T-cell (primary cell): ENCODE measurements at regions of chr2 and their contacts with region 1.

Region 1: GRCh38 chr2:178506101-178506500 is 25.8 kb downstream of the PLEKHA3 start:
- DNase-seq: no peak
- ATAC-seq: no peak
- H3K4me3 ChIP-seq: no peak overlapping the region
- H3K4me3 Mint-ChIP-seq: no peak overlapping the region
- H3K27ac ChIP-seq: no peak overlapping the region
- H3K27ac Mint-ChIP-seq: no peak overlapping the region
- H3K4me1 ChIP-seq: no peaks in the 10 kb centered on the region
- H3K4me1 Mint-ChIP-seq: no peaks in the 10 kb centered on the region
- H3K27me3 ChIP-seq: no peaks in the 10 kb centered on the region
- H3K27me3 Mint-ChIP-seq: no peaks in the 10 kb centered on the region

Region 2: GRCh38 chr2:178363252-178363651 is 142.8 kb before region 1 on chr2:
- CTCF ChIA-PET with region 1: no interaction called
- POLR2A ChIA-PET with region 1: interaction called in 1 of 2 experiments, 10 read pairs
- DNase-seq: no peak
- ATAC-seq: no peak
- H3K4me3 ChIP-seq: no peak overlapping the region
- H3K4me3 Mint-ChIP-seq: no peak overlapping the region
- H3K27ac ChIP-seq: no peak overlapping the region
- H3K27ac Mint-ChIP-seq: no peak overlapping the region
- H3K4me1 ChIP-seq: no peaks in the 10 kb centered on the region
- H3K4me1 Mint-ChIP-seq: no peaks in the 10 kb centered on the region
- H3K27me3 ChIP-seq: peaks cover 0 to 4% of the 10 kb centered on the region in 2 experiments
- H3K27me3 Mint-ChIP-seq: peaks cover 4 to 8% of the 10 kb centered on the region in 2 donors